ENCODE measurements at regions of chrX and their contacts with region 1.

Region 1: DNA sequence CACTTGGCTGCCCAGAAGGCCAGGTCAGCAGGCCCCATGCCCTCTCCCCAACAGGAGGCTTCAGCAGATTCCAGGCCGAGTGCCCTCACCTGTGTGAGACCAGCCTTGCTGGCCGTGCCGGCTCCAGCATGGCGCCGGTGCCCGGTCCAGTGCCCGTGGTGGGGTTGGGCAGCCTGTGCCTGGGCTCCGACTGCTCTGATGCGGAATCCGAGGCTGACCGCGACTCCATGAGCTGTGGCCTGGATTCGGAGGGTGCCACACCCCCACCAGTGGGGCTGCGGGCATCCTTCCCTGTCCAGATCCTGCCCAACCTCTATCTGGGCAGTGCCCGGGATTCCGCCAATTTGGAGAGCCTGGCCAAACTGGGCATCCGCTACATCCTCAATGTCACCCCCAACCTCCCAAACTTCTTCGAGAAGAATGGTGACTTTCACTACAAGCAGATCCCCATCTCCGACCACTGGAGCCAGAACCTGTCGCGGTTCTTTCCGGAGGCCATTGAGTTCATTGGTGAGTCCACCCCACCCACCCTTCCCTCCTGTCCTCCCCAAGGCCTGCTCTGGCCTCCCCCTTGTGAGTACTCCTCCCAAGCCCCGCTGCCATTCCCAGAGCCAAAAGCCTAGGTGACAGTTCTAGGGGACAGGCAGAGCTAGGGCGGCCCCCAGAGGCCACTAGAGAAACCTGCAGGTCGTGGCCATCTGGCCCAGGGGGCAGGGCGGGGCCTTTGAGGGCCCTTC is 2.3 kb downstream of the DUSP9 start:
- DNase-seq: peak; percentile 52 to 74 (median 61)
- ATAC-seq: peak; percentile 87
- H3K4me3 ChIP-seq: no peak overlapping the region
- H3K27ac ChIP-seq: no peak overlapping the region
- H3K4me1 ChIP-seq: peaks cover 5 to 49% of the 10 kb centered on the region in 2 experiments; a peak in 3 of 5 replicates
- H3K27me3 ChIP-seq: no peaks in the 10 kb centered on the region; a peak in 1 of 5 replicates
- CTCF ChIP-seq: peak; percentile 66 to 90 (median 77)
- EP300 ChIP-seq: no peak
- POLR2A ChIP-seq: no peak
- RAD21 ChIP-seq: peak in 1 of 2 experiments; percentile 64; a peak in 2 of 4 replicates

Region 2: DNA sequence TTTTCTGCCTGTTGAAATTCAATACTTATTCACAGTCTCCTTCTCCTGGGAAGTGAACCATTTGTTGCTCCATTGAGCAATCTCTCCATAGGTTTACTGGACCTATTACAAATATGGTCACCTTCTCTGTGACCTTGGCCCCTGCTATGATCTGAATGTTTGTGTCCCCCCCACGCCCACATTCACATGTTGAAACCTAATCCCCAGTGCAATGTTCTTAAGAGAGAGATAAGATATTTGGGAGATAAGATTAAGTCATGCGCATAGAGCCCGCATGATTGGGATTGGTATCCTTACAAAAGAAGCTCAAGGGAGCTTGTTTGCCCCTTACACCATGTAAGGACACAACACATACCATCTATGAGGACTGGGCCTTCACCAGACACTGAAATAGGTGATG is 1620.7 kb before region 1 on chrX:
- CTCF ChIA-PET with region 1: no interaction called
- POLR2A ChIA-PET with region 1: no interaction called
- in situ Hi-C with region 1: no loop called
- intact Hi-C with region 1: no loop called
- DNase-seq: no peak
- ATAC-seq: no peak
- H3K4me3 ChIP-seq: no peak overlapping the region
- H3K27ac ChIP-seq: no peak overlapping the region
- H3K4me1 ChIP-seq: peaks cover 3 to 19% of the 10 kb centered on the region in 2 experiments; a peak in 3 of 5 replicates
- H3K27me3 ChIP-seq: no peaks in the 10 kb centered on the region
- CTCF ChIP-seq: no peak
- EP300 ChIP-seq: no peak
- POLR2A ChIP-seq: no peak
- RAD21 ChIP-seq: no peak

Region 3: GRCh38 chrX:153554519-153555167 is 94.7 kb before region 1 on chrX:
- CTCF ChIA-PET with region 1: no interaction called
- POLR2A ChIA-PET with region 1: interaction called, 4 read pairs
- in situ Hi-C with region 1: no loop called
- intact Hi-C with region 1: loop called (anchors 5 kb)
- DNase-seq: peak; percentile 68 to 75 (median 68)
- ATAC-seq: peak; percentile 92
- H3K4me3 ChIP-seq: no peak overlapping the region
- H3K27ac ChIP-seq: no peak overlapping the region
- H3K4me1 ChIP-seq: peaks cover 0 to 27% of the 10 kb centered on the region in 2 experiments; a peak in 2 of 5 replicates
- H3K27me3 ChIP-seq: peaks cover 31 to 80% of the 10 kb centered on the region in 2 experiments
- CTCF ChIP-seq: peak; percentile 76 to 87 (median 81)
- EP300 ChIP-seq: no peak
- POLR2A ChIP-seq: no peak
- RAD21 ChIP-seq: peak; percentile 41 to 75

Region 4: GRCh38 chrX:153580700-153581386 is 68.5 kb before region 1 on chrX:
- CTCF ChIA-PET with region 1: no interaction called
- POLR2A ChIA-PET with region 1: no interaction called
- in situ Hi-C with region 1: no loop called
- intact Hi-C with region 1: loop called (anchors 2 kb)
- DNase-seq: peak; percentile 52 to 64 (median 63)
- ATAC-seq: peak; percentile 77
- H3K4me3 ChIP-seq: no peak overlapping the region
- H3K27ac ChIP-seq: no peak overlapping the region
- H3K4me1 ChIP-seq: peaks cover 0 to 4% of the 10 kb centered on the region in 2 experiments; a peak in 3 of 5 replicates
- H3K27me3 ChIP-seq: peaks cover 4 to 23% of the 10 kb centered on the region in 2 experiments; a peak in 4 of 5 replicates
- CTCF ChIP-seq: peak; percentile 62 to 68 (median 64); a peak in 5 of 6 replicates
- EP300 ChIP-seq: no peak
- POLR2A ChIP-seq: no peak
- RAD21 ChIP-seq: peak; percentile 26 to 44

Region 5: GRCh38 chrX:153708415-153708814 is 59.1 kb after region 1 on chrX:
- CTCF ChIA-PET with region 1: no interaction called
- POLR2A ChIA-PET with region 1: no interaction called
- in situ Hi-C with region 1: no loop called
- intact Hi-C with region 1: no loop called
- DNase-seq: peak; percentile 50 to 89 (median 65)
- ATAC-seq: peak; percentile 98
- H3K4me3 ChIP-seq: no peak overlapping the region
- H3K27ac ChIP-seq: peak overlapping the region; percentile 60; the same call in 2 of the 3 replicates
- H3K4me1 ChIP-seq: peaks cover 3 to 13% of the 10 kb centered on the region in 2 experiments; a peak in 4 of 5 replicates
- H3K27me3 ChIP-seq: no peaks in the 10 kb centered on the region
- CTCF ChIP-seq: peak; percentile 85 to 90 (median 87)
- EP300 ChIP-seq: no peak
- POLR2A ChIP-seq: no peak
- RAD21 ChIP-seq: peak; percentile 69 to 79

Region 6: DNA sequence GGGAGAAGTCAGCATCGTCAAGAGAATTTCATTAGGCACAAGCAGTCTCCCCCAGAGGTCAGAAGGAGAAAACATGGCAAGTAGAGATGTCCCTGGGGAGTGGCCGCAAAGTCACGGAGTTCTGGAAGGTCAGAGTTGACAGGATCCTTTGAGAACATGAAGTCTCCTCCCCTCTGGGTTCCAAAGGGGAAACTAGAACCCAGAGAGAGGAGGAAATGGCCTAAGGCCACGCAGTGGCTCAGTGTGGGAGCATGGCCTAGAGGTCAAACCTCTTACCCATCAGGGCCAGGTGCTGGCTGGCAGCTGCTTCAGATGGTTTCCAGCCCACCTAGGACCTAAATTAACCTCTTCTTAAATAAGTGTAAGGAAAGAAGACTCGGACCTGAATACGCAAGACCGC is 143.9 kb after region 1 on chrX:
- CTCF ChIA-PET with region 1: no interaction called
- POLR2A ChIA-PET with region 1: no interaction called
- in situ Hi-C with region 1: no loop called
- intact Hi-C with region 1: no loop called
- DNase-seq: peak in 3 of 4 experiments; percentile 24 to 65 (median 28)
- ATAC-seq: peak; percentile 31
- H3K4me3 ChIP-seq: peak overlapping the region; percentile 78
- H3K27ac ChIP-seq: peak overlapping the region; percentile 96
- H3K4me1 ChIP-seq: peaks cover 33 to 68% of the 10 kb centered on the region in 2 experiments
- H3K27me3 ChIP-seq: no peaks in the 10 kb centered on the region
- CTCF ChIP-seq: no peak
- EP300 ChIP-seq: no peak
- POLR2A ChIP-seq: no peak
- RAD21 ChIP-seq: no peak